ENCODE measurements at regions of chr11 and their contacts with region 1.

Region 1: GRCh38 chr11:11260903-11261302 is 92.1 kb downstream of the CSNK2A3 start:
- DNase-seq: no peak
- ATAC-seq: no peak
- H3K4me3 ChIP-seq: no peak overlapping the region
- H3K27ac ChIP-seq: no peak overlapping the region
- H3K4me1 ChIP-seq: no peaks in the 10 kb centered on the region
- H3K27me3 ChIP-seq: peaks cover 4% of the 10 kb centered on the region
- CTCF ChIP-seq: no peak

Region 2: GRCh38 chr11:11237070-11237832 is 23.7 kb before region 1 on chr11:
- CTCF ChIA-PET with region 1: no interaction called
- POLR2A ChIA-PET with region 1: interaction called, 11 read pairs
- in situ Hi-C with region 1: no loop called
- intact Hi-C with region 1: no loop called
- DNase-seq: no peak
- ATAC-seq: no peak
- H3K4me3 ChIP-seq: no peak overlapping the region
- H3K27ac ChIP-seq: no peak overlapping the region
- H3K4me1 ChIP-seq: no peaks in the 10 kb centered on the region
- H3K27me3 ChIP-seq: 0 out of 2 replicates have a peak, but pooled peaks cover 3% of the 10 kb centered on the region
- CTCF ChIP-seq: no peak